Left lung (tissue), 14 donors: ENCODE measurements at regions of chr1 and their contacts with region 1.

Region 1: DNA sequence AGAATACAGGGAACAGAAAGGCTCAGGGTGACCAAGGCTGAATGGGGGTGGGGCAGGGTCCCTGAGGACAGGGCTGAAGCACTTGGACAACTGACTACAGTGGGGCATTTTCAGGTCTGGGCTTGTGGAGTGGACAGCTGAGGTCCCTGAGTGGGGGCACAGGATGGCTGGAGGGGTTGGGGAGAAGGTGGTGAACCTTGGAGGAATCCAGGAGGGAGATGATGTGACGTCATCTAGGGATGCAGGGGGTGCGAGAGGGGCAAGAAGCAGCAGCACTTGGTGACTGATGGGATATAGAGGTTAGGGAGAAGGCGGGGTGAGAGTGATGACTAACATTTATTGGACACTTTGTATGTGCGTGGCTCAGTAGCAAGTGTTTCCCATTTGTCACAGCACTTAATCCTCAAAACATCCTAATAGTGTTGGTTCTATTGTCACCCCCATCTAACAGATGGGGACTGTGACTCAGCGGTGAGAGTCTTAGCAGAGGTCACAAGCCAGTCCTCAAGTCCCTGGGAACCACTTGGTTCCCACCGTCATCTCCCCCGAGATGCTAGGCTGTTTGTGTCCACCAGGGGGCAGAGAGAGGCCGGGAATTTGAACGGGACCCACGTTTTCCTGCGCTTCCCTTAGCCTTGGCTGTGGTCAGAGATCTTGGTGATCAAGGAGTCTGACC is 27.9 kb upstream of the BMP8B start:
- DNase-seq: peak; percentile 54 to 86 (median 76)
- ATAC-seq: peak; percentile 96
- H3K4me3 ChIP-seq: no peak overlapping the region
- H3K27ac ChIP-seq: no peak overlapping the region
- H3K4me1 ChIP-seq: peaks cover 0 to 5% of the 10 kb centered on the region in 2 donors
- H3K27me3 ChIP-seq: peaks cover 0 to 15% of the 10 kb centered on the region in 2 donors
- CTCF ChIP-seq: peak; percentile 80 to 92

Region 2: DNA sequence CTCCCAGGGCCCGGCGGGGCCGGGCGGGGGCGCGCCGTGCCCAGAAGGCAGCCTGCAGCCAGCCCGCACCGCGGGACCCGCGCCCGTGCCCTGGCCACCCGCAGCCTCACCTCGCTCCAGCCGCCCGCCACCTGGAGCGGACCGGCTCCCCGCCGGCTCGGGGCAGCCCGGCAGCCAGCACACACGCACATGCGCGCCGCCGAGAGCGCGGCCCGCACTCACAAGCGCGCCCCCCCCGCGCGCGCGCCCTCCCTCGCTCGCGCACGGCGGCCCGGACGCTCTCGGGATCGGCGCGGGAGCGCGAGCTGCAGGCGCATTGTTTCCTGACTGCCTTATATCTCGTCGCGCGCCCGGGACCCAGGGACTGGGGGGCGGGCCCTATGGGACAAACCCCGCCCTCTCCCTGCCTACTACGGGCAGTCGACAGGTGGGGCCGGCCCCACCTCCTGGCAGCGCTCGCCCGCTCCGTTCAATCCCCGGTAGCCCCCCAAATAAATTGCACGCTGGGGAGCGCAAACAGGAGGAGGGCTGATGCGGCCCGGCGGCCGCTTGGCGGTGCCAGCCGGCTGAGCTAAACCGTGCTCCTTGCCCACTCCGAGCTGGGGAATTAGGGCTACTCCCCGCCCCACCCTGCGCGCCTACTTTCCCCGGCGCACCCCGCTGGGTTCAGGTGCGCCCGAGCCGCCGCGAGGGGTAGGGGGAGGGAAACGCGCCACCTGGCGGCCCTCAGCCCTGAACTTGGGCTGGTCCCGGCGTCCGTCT is 85.3 kb after region 1 on chr1 and contains the start of gene MYCL:
- intact Hi-C with region 1: loop called in 1 of 2 experiments (anchors 5 kb)
- DNase-seq: peak; percentile 63 to 95 (median 86)
- ATAC-seq: peak; percentile 94
- H3K4me3 ChIP-seq: peak within 1 kb of the TSS; percentile 55 to 57
- H3K27ac ChIP-seq: peak within 1 kb of the TSS; percentile 55 to 65
- H3K4me1 ChIP-seq: peaks cover 6 to 27% of the 10 kb centered on the region in 2 donors
- H3K27me3 ChIP-seq: peaks cover 20 to 83% of the 10 kb centered on the region in 2 donors
- CTCF ChIP-seq: peak; percentile 67 to 74
- polyA plus RNA-seq, gene MYCL: 8.1 to 12.9 (median 11.9) TPM

Region 3: GRCh38 chr1:39973503-39974135 is 157.1 kb after region 1 on chr1:
- intact Hi-C with region 1: loop called in 1 of 2 experiments (anchors 5 kb)
- DNase-seq: peak; percentile 51 to 92 (median 74)
- ATAC-seq: peak; percentile 66
- H3K4me3 ChIP-seq: no peak overlapping the region
- H3K27ac ChIP-seq: no peak overlapping the region
- H3K4me1 ChIP-seq: peaks cover 0 to 21% of the 10 kb centered on the region in 2 donors
- H3K27me3 ChIP-seq: no peaks in the 10 kb centered on the region
- CTCF ChIP-seq: peak; percentile 88 to 95